ENCODE measurements at regions of chr19 and their contacts with region 1.

Region 1: GRCh38 chr19:12890787-12891552 is at the start of gene GCDH:
- DNase-seq: peak; percentile 77 to 98 (median 96)
- ATAC-seq: peak; percentile 97
- H3K4me3 ChIP-seq: peak within 1 kb of the TSS; percentile 87
- H3K4me3 Mint-ChIP-seq: peak within 1 kb of the TSS; percentile 91 to 100 (median 99)
- H3K27ac ChIP-seq: peak within 1 kb of the TSS; percentile 83
- H3K27ac Mint-ChIP-seq: peak within 1 kb of the TSS; percentile 94 to 99 (median 98)
- H3K4me1 ChIP-seq: peaks cover 5 to 15% of the 10 kb centered on the region in 2 donors
- H3K4me1 Mint-ChIP-seq: peaks cover 16 to 41% (median 30%) of the 10 kb centered on the region in 7 donors
- H3K27me3 ChIP-seq: no peaks in the 10 kb centered on the region
- H3K27me3 Mint-ChIP-seq: peaks cover 0 to 6% (median 0%) of the 10 kb centered on the region in 5 donors
- total RNA-seq, gene GCDH: 40.1 to 74.2 (median 54.5) TPM

Region 2: DNA sequence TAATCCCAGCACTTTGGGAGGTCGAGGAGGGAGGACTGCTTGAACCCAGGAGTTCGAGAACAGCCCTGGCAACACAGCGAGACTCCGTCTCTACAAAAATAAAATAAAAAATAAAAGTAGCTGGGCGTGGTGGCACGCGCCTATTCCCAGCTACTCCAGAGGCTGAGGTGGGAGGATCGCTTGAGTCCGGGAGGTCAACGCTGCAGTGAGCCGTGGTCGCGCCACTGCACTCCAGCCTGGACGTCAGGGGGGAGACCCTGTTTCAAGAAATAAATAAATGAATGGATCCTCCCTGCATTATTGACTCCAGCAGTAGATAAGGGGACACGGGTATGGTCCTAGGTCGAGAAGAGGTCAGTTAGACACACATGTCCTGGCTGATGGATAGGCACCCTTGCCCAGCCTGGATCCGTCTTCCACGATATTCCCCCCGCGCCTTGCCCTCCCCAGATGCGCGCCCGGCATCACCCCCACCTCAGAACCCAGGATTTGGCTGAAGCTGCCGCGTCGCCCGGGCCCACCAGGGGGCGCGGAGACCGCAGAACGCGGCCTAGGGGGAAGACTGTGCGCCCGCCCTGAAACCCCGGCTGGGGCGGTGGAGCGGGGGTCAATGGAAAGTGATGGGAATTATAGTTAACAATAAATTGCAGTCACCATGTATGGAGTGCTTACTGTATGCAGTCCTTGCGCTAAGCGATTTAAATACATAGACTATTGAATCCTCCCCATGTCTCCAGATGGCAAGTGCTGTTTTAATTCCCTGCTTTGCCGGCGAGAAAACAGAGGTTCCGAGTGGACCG is 113.6 kb before region 1 on chr19:
- CTCF ChIA-PET with region 1: no interaction called
- POLR2A ChIA-PET with region 1: no interaction called
- intact Hi-C with region 1: loop called in 1 of 2 experiments (anchors 2 kb)
- DNase-seq: peak; percentile 69 to 89 (median 82)
- ATAC-seq: peak; percentile 18
- H3K4me3 ChIP-seq: peak overlapping the region; percentile 76
- H3K4me3 Mint-ChIP-seq: peak overlapping the region; percentile 82 to 95 (median 87)
- H3K27ac ChIP-seq: peak overlapping the region; percentile 94
- H3K27ac Mint-ChIP-seq: peak overlapping the region; percentile 42 to 98 (median 94)
- H3K4me1 ChIP-seq: peaks cover 16 to 28% of the 10 kb centered on the region in 2 donors
- H3K4me1 Mint-ChIP-seq: peaks cover 20 to 45% (median 39%) of the 10 kb centered on the region in 7 donors
- H3K27me3 ChIP-seq: no peaks in the 10 kb centered on the region
- H3K27me3 Mint-ChIP-seq: no peaks in the 10 kb centered on the region

Region 3: DNA sequence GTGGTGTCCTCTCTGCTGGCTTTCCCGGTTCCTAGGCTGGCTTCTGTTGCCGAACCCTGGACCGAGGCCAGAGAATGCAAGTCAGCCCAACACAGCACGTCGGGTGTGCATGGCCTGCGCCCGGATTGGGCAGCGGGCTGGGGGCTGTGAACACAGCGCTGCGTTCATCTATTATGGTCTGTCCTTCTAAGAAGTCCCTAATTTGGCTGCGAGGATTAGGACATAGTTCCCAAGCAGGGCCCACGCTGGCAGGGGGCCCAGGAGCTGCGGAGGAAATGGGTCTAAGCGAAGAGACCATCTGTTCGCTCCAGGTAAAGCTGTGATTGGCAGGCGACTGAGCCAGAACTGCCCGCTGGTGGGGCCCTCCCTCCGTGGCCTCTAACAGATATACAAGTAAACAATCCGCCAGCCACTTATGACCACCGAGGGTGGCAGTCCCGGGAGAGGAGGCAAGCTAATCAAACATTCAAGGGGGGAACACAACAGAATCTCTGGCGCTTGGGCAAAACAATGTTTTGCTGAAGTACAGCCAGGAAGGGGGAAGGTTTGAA is 22.1 kb after region 1 on chr19:
- CTCF ChIA-PET with region 1: interaction called, 5 read pairs
- POLR2A ChIA-PET with region 1: interaction called, 46 read pairs
- intact Hi-C with region 1: loop called in 1 of 2 experiments (anchors 1 kb)
- DNase-seq: no peak
- ATAC-seq: no peak
- H3K4me3 ChIP-seq: no peak overlapping the region
- H3K4me3 Mint-ChIP-seq: peak overlapping the region in 6 of 10 donors; percentile 23 to 88 (median 52)
- H3K27ac ChIP-seq: peak overlapping the region; percentile 54
- H3K27ac Mint-ChIP-seq: peak overlapping the region; percentile 81 to 99 (median 97)
- H3K4me1 ChIP-seq: peaks cover 12 to 23% of the 10 kb centered on the region in 2 donors
- H3K4me1 Mint-ChIP-seq: peaks cover 11 to 32% (median 25%) of the 10 kb centered on the region in 7 donors
- H3K27me3 ChIP-seq: no peaks in the 10 kb centered on the region
- H3K27me3 Mint-ChIP-seq: no peaks in the 10 kb centered on the region

Region 4: GRCh38 chr19:12918271-12918670 is 27.3 kb after region 1 on chr19:
- CTCF ChIA-PET with region 1: interaction called, 5 read pairs
- POLR2A ChIA-PET with region 1: interaction called, 46 read pairs
- intact Hi-C with region 1: loop called (anchors 1 kb)
- DNase-seq: no peak
- ATAC-seq: no peak
- H3K4me3 ChIP-seq: no peak overlapping the region
- H3K4me3 Mint-ChIP-seq: peak overlapping the region in 9 of 10 donors; percentile 23 to 87 (median 76)
- H3K27ac ChIP-seq: no peak overlapping the region
- H3K27ac Mint-ChIP-seq: peak overlapping the region in 6 of 9 donors; percentile 48 to 96 (median 91)
- H3K4me1 ChIP-seq: peaks cover 12 to 27% of the 10 kb centered on the region in 2 donors
- H3K4me1 Mint-ChIP-seq: peaks cover 9 to 51% (median 34%) of the 10 kb centered on the region in 7 donors
- H3K27me3 ChIP-seq: no peaks in the 10 kb centered on the region
- H3K27me3 Mint-ChIP-seq: no peaks in the 10 kb centered on the region

Region 5: GRCh38 chr19:12945479-12946091 is 54.6 kb after region 1 on chr19 and contains the start of gene RAD23A:
- CTCF ChIA-PET with region 1: no interaction called
- POLR2A ChIA-PET with region 1: interaction called, 8 read pairs
- intact Hi-C with region 1: loop called in 1 of 2 experiments (anchors 1 kb)
- DNase-seq: peak; percentile 96 to 99 (median 97)
- ATAC-seq: peak; percentile 94
- H3K4me3 ChIP-seq: peak within 1 kb of the TSS; percentile 67
- H3K4me3 Mint-ChIP-seq: peak within 1 kb of the TSS; percentile 88 to 97 (median 92)
- H3K27ac ChIP-seq: peak within 1 kb of the TSS; percentile 86
- H3K27ac Mint-ChIP-seq: peak within 1 kb of the TSS; percentile 93 to 99 (median 97)
- H3K4me1 ChIP-seq: peaks cover 21 to 26% of the 10 kb centered on the region in 2 donors
- H3K4me1 Mint-ChIP-seq: peaks cover 24 to 61% (median 46%) of the 10 kb centered on the region in 7 donors
- H3K27me3 ChIP-seq: no peaks in the 10 kb centered on the region
- H3K27me3 Mint-ChIP-seq: peaks cover 0 to 3% (median 0%) of the 10 kb centered on the region in 5 donors
- total RNA-seq, gene RAD23A: 75.0 to 111 (median 96.4) TPM

Region 6: GRCh38 chr19:12956446-12957388 is 65.7 kb after region 1 on chr19 and contains the start of gene GADD45GIP1:
- CTCF ChIA-PET with region 1: interaction called, 3 read pairs
- POLR2A ChIA-PET with region 1: interaction called, 6 read pairs
- intact Hi-C with region 1: loop called (anchors 1 kb)
- DNase-seq: peak; percentile 68 to 84 (median 80)
- ATAC-seq: peak; percentile 99
- H3K4me3 ChIP-seq: peak within 1 kb of the TSS; percentile 84
- H3K4me3 Mint-ChIP-seq: peak within 1 kb of the TSS; percentile 81 to 93 (median 88)
- H3K27ac ChIP-seq: peak within 1 kb of the TSS; percentile 81
- H3K27ac Mint-ChIP-seq: peak within 1 kb of the TSS; percentile 78 to 94 (median 91)
- H3K4me1 ChIP-seq: peaks cover 0 to 11% of the 10 kb centered on the region in 2 donors
- H3K4me1 Mint-ChIP-seq: peaks cover 16 to 29% (median 22%) of the 10 kb centered on the region in 7 donors
- H3K27me3 ChIP-seq: no peaks in the 10 kb centered on the region
- H3K27me3 Mint-ChIP-seq: no peaks in the 10 kb centered on the region
- total RNA-seq, gene GADD45GIP1: 8.5 to 17.0 (median 13.8) TPM

Region 7: GRCh38 chr19:12965017-12965811 is 74.2 kb after region 1 on chr19:
- CTCF ChIA-PET with region 1: interaction called, 42 read pairs
- POLR2A ChIA-PET with region 1: interaction called, 4 read pairs
- intact Hi-C with region 1: loop called in 1 of 2 experiments (anchors 1 kb)
- DNase-seq: peak; percentile 57 to 91 (median 78)
- ATAC-seq: peak; percentile 98
- H3K4me3 ChIP-seq: peak overlapping the region; percentile 87
- H3K4me3 Mint-ChIP-seq: peak overlapping the region; percentile 78 to 92 (median 88)
- H3K27ac ChIP-seq: peak overlapping the region; percentile 21
- H3K27ac Mint-ChIP-seq: peak overlapping the region in 8 of 9 donors; percentile 10 to 86 (median 54)
- H3K4me1 ChIP-seq: peaks cover 3 to 9% of the 10 kb centered on the region in 2 donors
- H3K4me1 Mint-ChIP-seq: peaks cover 5 to 11% (median 7%) of the 10 kb centered on the region in 7 donors
- H3K27me3 ChIP-seq: no peaks in the 10 kb centered on the region
- H3K27me3 Mint-ChIP-seq: no peaks in the 10 kb centered on the region

Region 8: GRCh38 chr19:13622766-13623715 is 732.1 kb after region 1 on chr19:
- CTCF ChIA-PET with region 1: no interaction called
- POLR2A ChIA-PET with region 1: no interaction called
- intact Hi-C with region 1: no loop called
- DNase-seq: no peak
- ATAC-seq: no peak
- H3K4me3 ChIP-seq: no peak overlapping the region
- H3K4me3 Mint-ChIP-seq: no peak overlapping the region
- H3K27ac ChIP-seq: no peak overlapping the region
- H3K27ac Mint-ChIP-seq: no peak overlapping the region
- H3K4me1 ChIP-seq: no peaks in the 10 kb centered on the region
- H3K4me1 Mint-ChIP-seq: peaks cover 0 to 1% (median 0%) of the 10 kb centered on the region in 7 donors
- H3K27me3 ChIP-seq: no peaks in the 10 kb centered on the region
- H3K27me3 Mint-ChIP-seq: peaks cover 31 to 65% (median 62%) of the 10 kb centered on the region in 5 donors